Activated T-helper 1 cell treated with anti-CD3 and anti-CD28 coated beads, Interleukin-12 subunit alpha, Interleukin-12 subunit beta, Interleukin-2, Interleukin-4 antibody, amounts not matched to agents 30 ng/mL and 10 ng/mL and 1 ng/mL, durations not matched to agents 14 hours and 24 hours and 36 hours (primary cell): ENCODE measurements at regions of chrX and their contacts with region 1.

Region 1: GRCh38 chrX:47619486-47620302 is at the start of gene SYN1:
- DNase-seq: peak; percentile 75
- H3K4me3 Mint-ChIP-seq: peak within 1 kb of the TSS; percentile 64
- H3K27ac Mint-ChIP-seq: peak within 1 kb of the TSS; percentile 65
- H3K4me1 Mint-ChIP-seq: peaks cover 19% of the 10 kb centered on the region
- H3K27me3 Mint-ChIP-seq: peaks cover 33% of the 10 kb centered on the region
- total RNA-seq, gene SYN1: 0.21 and 0.22 TPM in 2 replicates

Region 2: GRCh38 chrX:47581731-47582647 is 37.7 kb before region 1 on chrX and contains the start of gene TIMP1:
- intact Hi-C with region 1: loop called (anchors 1 kb)
- DNase-seq: peak; percentile 78
- H3K4me3 Mint-ChIP-seq: peak within 1 kb of the TSS; percentile 67
- H3K27ac Mint-ChIP-seq: peak within 1 kb of the TSS; percentile 67
- H3K4me1 Mint-ChIP-seq: peaks cover 46% of the 10 kb centered on the region
- H3K27me3 Mint-ChIP-seq: peaks cover 3% of the 10 kb centered on the region
- total RNA-seq, gene TIMP1: 61.7 and 70.1 TPM in 2 replicates

Region 3: DNA sequence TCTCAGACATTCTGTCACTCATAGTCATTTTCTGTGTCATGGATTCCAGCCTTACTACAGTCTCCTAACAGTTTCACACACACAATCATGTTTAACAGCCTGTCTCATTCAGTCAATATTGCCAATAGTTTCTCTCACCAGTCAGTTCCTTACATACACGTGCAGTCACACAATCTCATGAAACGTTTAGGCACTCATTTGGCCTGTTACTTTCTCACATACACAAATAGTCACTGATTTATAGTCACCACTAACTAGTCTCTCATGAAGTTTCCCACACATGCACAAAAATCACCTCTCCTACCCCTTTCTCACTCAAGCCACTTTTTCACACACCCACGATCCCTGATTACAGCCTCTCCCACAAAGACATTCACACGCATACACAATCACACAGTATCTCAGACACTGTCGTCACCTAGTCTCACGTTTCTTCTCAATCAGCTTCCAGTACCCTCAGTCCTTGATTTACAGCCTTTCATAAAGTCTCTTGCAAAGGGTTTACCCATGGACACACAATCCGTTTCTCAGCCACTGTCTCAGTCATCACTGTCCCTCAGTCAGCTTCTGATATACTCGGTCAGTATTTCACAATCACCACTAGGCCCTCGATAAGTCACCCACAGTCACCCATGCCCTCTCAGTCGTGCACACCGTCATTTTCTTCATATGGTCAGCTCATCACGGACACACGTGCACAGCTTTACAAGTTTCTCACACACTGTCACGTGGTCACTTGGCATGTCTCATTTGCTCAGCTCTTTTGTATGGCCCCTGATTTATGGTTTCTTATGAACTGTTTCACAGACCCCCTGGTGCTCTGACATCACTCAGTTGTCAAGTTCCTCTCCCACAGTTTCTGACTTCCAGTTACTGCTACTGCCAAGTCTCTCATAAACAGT is 14.2 kb after region 1 on chrX:
- intact Hi-C with region 1: loop called (anchors 2 kb)
- DNase-seq: no peak
- H3K4me3 Mint-ChIP-seq: no peak overlapping the region
- H3K27ac Mint-ChIP-seq: no peak overlapping the region
- H3K4me1 Mint-ChIP-seq: peaks cover 27% of the 10 kb centered on the region
- H3K27me3 Mint-ChIP-seq: peaks cover 2% of the 10 kb centered on the region

Region 4: DNA sequence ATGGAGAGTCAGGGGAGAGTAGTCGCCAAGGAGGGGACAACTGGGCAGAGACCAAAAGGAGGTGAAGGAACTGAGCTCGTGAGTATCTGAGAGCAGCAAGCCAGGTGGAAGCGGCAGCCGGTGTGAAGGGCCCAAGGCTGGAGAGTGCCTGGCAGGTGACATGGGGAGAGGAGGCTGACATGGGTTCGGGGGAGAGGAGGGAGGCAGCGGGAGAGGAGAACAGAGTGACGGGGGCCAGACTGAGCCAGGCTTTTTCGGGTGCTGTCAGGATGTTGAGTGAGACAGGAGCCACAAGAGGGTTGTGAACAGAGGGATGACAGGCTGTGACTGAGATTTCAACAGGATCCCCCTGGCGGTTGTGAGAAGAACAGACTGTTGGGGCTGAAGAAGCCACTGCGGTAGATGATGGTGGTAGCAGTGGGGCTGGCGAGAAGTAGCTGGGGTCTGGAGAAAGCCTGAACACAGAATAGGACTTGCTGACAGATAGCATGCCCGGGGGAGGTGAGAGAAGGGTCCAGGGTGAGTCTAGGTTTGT is 24.9 kb after region 1 on chrX:
- intact Hi-C with region 1: no loop called
- DNase-seq: no peak
- H3K4me3 Mint-ChIP-seq: no peak overlapping the region
- H3K27ac Mint-ChIP-seq: no peak overlapping the region
- H3K4me1 Mint-ChIP-seq: peaks cover 47% of the 10 kb centered on the region
- H3K27me3 Mint-ChIP-seq: no peaks in the 10 kb centered on the region